ENCODE measurements at regions of chr2 and their contacts with region 1.

Region 1: DNA sequence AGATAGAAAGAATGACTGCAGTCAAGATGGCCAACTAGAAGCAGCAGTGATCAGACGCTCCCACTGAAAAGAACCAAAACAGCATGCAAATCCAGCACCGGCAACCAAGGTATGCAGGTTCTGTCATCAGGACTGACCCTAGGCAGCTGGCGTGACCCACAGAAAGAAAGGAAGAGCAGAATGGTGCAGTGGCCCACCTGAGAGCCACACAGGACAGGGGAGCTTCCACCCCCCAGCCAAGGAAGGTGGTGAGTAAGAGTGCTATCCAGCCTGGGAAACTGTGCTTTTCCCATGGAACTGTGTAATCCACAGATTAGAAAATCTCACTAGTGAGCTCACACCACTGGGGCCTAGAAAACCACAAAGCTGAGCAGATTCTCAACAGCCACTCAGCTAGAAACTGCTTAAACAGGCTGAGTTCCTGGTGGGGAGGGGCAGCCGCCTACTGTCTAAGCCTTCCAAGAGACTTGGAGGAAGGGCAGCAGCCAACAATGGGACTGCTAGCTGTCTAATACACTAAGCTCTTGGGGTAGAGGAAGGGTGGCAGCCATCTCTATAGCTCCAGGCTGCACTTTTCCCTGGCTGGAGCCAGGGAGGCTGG is 127.9 kb downstream of the EVA1A start:
- DNase-seq: peak; percentile 24
- ATAC-seq: peak; percentile 69
- H3K4me3 Mint-ChIP-seq: peak overlapping the region; percentile 60
- H3K27ac Mint-ChIP-seq: peak overlapping the region; percentile 83
- H3K4me1 Mint-ChIP-seq: peaks cover 57% of the 10 kb centered on the region
- H3K27me3 Mint-ChIP-seq: no peaks in the 10 kb centered on the region
- CTCF ChIP-seq: no peak

Region 2: GRCh38 chr2:75389271-75389670 is 43.6 kb before region 1 on chr2:
- CTCF ChIA-PET with region 1: no interaction called
- POLR2A ChIA-PET with region 1: no interaction called
- intact Hi-C with region 1: loop called (anchors 1 kb)
- DNase-seq: no peak
- ATAC-seq: peak; percentile 100
- H3K4me3 Mint-ChIP-seq: no peak overlapping the region
- H3K27ac Mint-ChIP-seq: no peak overlapping the region
- H3K4me1 Mint-ChIP-seq: peaks cover 40% of the 10 kb centered on the region
- H3K27me3 Mint-ChIP-seq: no peaks in the 10 kb centered on the region
- CTCF ChIP-seq: no peak

Region 3: GRCh38 chr2:75416420-75417342 is 16.2 kb before region 1 on chr2:
- CTCF ChIA-PET with region 1: interaction called, 5 read pairs
- POLR2A ChIA-PET with region 1: interaction called, 21 read pairs
- intact Hi-C with region 1: loop called (anchors 1 kb)
- DNase-seq: no peak
- ATAC-seq: peak; percentile 91
- H3K4me3 Mint-ChIP-seq: peak overlapping the region; percentile 89
- H3K27ac Mint-ChIP-seq: peak overlapping the region; percentile 95
- H3K4me1 Mint-ChIP-seq: peaks cover 40% of the 10 kb centered on the region
- H3K27me3 Mint-ChIP-seq: peaks cover 3% of the 10 kb centered on the region
- CTCF ChIP-seq: no peak

Measured in activated B cell treated with CpG ODN at 0.5 μM for 24 hours (primary cell).